A673 (cell line): ENCODE measurements at regions of chr4 and their contacts with region 1.

Region 1: GRCh38 chr4:38759113-38759789 is 23.5 kb downstream of the TLR10 start:
- DNase-seq: peak; percentile 62
- H3K4me3 ChIP-seq: no peak overlapping the region
- H3K27ac ChIP-seq: no peak overlapping the region
- H3K4me1 ChIP-seq: no peaks in the 10 kb centered on the region
- H3K27me3 ChIP-seq: no peaks in the 10 kb centered on the region
- CTCF ChIP-seq: peak; percentile 80

Region 2: DNA sequence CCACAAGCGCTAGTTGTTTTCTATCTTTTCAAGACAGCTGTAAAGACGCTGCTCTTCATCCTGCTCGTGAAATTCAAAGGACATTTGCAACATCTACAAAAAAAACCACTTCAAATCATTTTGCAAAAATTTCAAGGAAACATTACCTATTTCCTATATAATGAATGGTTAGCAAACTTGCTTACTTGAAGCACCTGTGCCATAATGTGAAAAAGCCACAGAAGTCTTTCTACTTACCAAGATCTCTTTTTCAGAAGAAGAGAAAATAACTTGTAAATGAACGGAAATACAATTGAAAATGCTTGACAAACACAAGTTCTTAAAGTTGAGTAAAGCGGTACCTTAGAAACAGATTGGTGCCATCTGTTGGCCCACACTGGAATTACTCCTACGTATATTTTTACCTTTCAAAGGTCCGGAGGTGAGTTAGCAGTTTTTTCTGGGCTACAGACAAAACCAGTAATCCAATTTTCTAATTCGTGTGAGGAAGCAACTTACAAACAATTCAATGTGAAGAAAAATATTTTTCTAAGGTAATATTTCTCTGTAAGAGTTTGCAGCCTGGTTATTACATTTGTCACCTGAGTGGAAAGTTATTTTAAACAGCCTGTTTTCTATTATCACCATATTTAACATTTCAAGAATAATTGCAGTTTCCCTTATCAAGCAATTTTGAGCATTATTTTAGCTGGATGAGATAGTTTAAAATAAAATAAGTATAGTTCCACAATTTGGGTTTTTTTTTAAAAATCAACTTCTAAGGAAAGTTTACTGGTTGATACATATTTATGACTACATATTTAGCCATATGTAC is 97.5 kb after region 1 on chr4 and contains the start of gene TLR6:
- CTCF ChIA-PET with region 1: interaction called, 7 read pairs
- POLR2A ChIA-PET with region 1: no interaction called
- intact Hi-C with region 1: loop called (anchors 2 kb)
- DNase-seq: peak; percentile 65
- H3K4me3 ChIP-seq: peak within 1 kb of the TSS; percentile 14
- H3K27ac ChIP-seq: peak within 1 kb of the TSS; percentile 11
- H3K4me1 ChIP-seq: peaks cover 7% of the 10 kb centered on the region
- H3K27me3 ChIP-seq: no peaks in the 10 kb centered on the region
- CTCF ChIP-seq: peak; percentile 84
- total RNA-seq, gene TLR6: 0.59 and 1.5 TPM in 2 replicates

Region 3: GRCh38 chr4:39134683-39135319 is 375.6 kb after region 1 on chr4:
- CTCF ChIA-PET with region 1: interaction called, 3 read pairs
- POLR2A ChIA-PET with region 1: no interaction called
- intact Hi-C with region 1: loop called (anchors 5 kb)
- DNase-seq: peak; percentile 45
- H3K4me3 ChIP-seq: no peak overlapping the region
- H3K27ac ChIP-seq: no peak overlapping the region
- H3K4me1 ChIP-seq: peaks cover 8% of the 10 kb centered on the region
- H3K27me3 ChIP-seq: no peaks in the 10 kb centered on the region
- CTCF ChIP-seq: no peak

Region 4: DNA sequence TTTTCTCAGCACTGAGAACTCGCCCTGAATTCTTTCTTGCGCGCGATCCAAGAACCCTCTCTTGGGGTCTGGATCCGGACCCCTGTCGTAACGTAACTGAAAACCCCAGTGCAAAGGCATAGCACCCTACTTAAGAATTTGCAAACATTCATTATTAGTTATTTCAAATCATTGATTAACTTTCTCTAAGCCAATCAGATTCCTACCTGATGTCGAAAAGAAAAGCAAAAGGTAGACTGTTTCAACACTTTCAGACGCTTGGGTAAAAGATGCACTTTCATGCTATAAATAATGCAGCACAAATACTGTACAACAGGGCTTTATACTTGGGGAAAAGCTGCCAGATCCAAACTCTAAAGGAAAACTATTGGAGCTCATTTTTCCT is 422.3 kb after region 1 on chr4:
- CTCF ChIA-PET with region 1: no interaction called
- POLR2A ChIA-PET with region 1: no interaction called
- intact Hi-C with region 1: no loop called
- DNase-seq: no peak
- H3K4me3 ChIP-seq: peak overlapping the region; percentile 63
- H3K27ac ChIP-seq: peak overlapping the region; percentile 37
- H3K4me1 ChIP-seq: peaks cover 8% of the 10 kb centered on the region
- H3K27me3 ChIP-seq: no peaks in the 10 kb centered on the region
- CTCF ChIP-seq: no peak

Region 5: DNA sequence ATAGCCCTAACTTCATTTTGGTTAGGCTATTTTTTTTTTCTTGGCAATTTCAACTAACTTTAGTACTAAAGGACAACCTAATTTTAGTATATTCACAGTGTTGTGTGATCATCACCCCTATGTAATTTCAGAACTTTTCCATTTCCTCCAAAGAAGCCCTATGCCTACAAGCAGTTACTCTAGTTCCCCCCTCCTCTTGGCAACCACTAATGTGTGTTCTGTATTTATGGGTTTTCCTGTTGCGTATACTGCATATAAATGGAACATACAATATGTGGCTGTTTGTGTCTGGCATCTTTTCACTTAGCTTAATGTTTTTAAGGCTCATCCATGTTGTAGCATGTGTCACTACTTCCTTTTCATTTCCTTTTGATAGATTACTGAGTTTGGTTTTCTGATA is 1355.0 kb after region 1 on chr4:
- CTCF ChIA-PET with region 1: no interaction called
- POLR2A ChIA-PET with region 1: no interaction called
- intact Hi-C with region 1: no loop called
- DNase-seq: no peak
- H3K4me3 ChIP-seq: no peak overlapping the region
- H3K27ac ChIP-seq: no peak overlapping the region
- H3K4me1 ChIP-seq: peaks cover 3% of the 10 kb centered on the region
- H3K27me3 ChIP-seq: no peaks in the 10 kb centered on the region
- CTCF ChIP-seq: no peak